ENCODE measurements at regions of chr13 and their contacts with region 1.

Region 1: DNA sequence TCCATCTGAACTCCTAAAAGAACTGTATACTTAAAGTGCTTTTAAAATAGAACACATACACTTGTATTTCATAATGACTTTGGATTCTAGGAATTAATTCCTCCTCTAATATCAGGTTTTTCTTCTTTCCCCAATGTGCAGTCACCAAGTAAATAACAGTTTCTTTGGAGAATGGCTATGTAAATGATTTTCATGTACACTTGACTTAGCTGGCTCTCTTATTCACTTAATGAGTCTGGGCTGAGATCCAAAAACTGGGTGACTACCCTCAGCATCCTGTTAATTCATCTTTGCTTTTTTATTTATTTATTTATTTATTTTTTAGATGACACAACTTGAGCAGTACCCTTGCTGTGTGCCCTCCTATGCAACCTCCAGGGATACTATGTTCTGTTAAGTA is 1003.7 kb downstream of the SLITRK1 start:
- DNase-seq: no peak
- H3K4me3 ChIP-seq: no peak overlapping the region
- H3K27ac ChIP-seq: no peak overlapping the region
- H3K4me1 ChIP-seq: no peaks in the 10 kb centered on the region
- H3K27me3 ChIP-seq: no peaks in the 10 kb centered on the region
- CTCF ChIP-seq: no peak

Region 2: GRCh38 chr13:82898586-82898985 is 20.1 kb after region 1 on chr13:
- CTCF ChIA-PET with region 1: no interaction called
- POLR2A ChIA-PET with region 1: no interaction called
- intact Hi-C with region 1: loop called (anchors 1 kb)
- DNase-seq: no peak
- H3K4me3 ChIP-seq: no peak overlapping the region
- H3K27ac ChIP-seq: no peak overlapping the region
- H3K4me1 ChIP-seq: no peaks in the 10 kb centered on the region
- H3K27me3 ChIP-seq: no peaks in the 10 kb centered on the region
- CTCF ChIP-seq: no peak